ENCODE measurements at regions of chr12 and their contacts with region 1.

Region 1: DNA sequence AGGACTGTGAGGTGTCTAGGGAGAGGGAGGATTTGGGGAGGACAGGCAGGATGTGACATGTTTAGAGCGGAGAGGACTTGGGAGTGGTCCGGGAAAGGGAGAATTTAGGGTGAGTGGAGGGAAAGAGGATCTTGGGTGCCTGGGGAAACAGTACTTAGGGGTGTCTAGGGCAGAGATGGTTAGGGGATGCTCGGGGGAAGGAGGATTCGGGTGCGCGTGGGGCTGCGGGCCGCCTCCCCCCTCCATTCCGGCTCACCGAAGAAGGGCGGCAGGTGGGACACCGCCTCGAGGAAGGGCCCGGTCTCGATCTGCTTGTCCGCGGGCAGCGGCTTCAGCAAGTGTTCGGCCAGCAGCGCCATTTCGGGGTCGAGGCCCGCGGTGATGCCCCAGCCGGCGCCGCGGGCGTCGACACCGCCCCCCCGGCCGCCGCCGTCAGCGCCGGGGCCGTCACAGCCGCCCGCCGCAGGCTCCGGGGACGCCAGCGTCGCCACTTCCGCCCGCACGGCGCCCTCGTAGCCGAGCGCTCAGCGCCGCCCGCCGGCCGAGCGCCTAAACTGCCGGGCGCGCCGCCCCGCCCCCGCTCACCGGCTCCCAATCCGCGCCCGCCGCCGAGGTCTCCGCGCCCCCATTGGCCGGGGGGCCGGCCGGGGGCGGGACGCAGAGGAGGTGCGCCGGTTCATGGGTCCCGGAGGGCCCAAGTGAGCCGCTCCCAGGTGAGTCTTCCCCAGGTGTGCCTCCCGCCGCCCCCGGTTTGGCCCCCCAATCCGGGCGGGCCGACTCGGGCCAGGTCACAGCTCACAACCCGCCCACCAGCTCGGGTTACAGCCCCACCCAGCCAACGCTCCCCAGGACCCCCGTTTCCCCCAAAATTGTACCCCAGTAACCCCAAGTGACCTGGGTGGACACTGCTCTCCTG is at the start of gene GLTP:
- DNase-seq: peak; percentile 83
- H3K4me3 ChIP-seq: peak within 1 kb of the TSS; percentile 77 to 86 (median 83)
- H3K27ac ChIP-seq: peak within 1 kb of the TSS; percentile 72
- H3K4me1 ChIP-seq: peaks cover 31% of the 10 kb centered on the region
- H3K27me3 ChIP-seq: no peaks in the 10 kb centered on the region
- CTCF ChIP-seq: peak; percentile 41 to 44
- total RNA-seq, gene GLTP: 60.2 to 63.8 TPM

Region 2: DNA sequence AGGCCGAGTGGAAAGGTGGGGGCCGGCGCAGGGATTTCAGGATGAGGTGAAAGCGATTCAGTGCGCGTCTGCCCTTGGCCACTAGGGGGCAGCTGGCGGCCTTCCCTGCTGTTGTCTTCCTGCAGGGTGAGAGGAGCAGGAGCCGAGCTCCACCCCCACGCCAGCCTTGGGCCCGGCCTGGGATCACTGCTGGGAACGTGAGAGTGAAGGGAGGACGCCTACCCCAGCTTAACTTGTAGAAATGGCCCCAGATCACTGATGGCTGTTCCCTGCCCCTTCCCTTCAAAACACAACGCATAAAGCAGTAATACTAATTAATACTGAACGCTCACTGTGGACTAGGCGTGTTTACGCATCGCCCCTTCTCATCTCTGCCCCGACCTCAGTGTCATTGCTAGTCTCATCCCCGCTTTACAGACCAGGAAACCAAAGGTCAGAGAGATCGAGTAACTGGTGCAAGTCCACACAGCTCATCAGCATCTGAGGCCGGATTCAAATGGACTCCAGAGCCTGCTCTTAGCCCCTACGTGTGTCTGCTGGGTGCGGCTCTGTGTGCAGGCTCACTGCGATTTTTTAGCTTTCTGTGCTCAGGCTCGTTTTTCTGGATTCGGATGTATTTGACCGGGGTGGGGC is 282.4 kb before region 1 on chr12:
- CTCF ChIA-PET with region 1: no interaction called
- dilution Hi-C with region 1: no loop called
- in situ Hi-C with region 1: no loop called
- intact Hi-C with region 1: loop called (anchors 5 kb)
- DNase-seq: peak; percentile 62
- H3K4me3 ChIP-seq: no peak overlapping the region
- H3K27ac ChIP-seq: no peak overlapping the region
- H3K4me1 ChIP-seq: peaks cover 5% of the 10 kb centered on the region
- H3K27me3 ChIP-seq: no peaks in the 10 kb centered on the region
- CTCF ChIP-seq: peak; percentile 91 to 97

Region 3: GRCh38 chr12:109858764-109859163 is 21.5 kb before region 1 on chr12:
- CTCF ChIA-PET with region 1: no interaction called
- dilution Hi-C with region 1: no loop called
- in situ Hi-C with region 1: no loop called
- intact Hi-C with region 1: loop called (anchors 1 kb)
- DNase-seq: no peak
- H3K4me3 ChIP-seq: no peak overlapping the region
- H3K27ac ChIP-seq: no peak overlapping the region
- H3K4me1 ChIP-seq: no peaks in the 10 kb centered on the region
- H3K27me3 ChIP-seq: no peaks in the 10 kb centered on the region
- CTCF ChIP-seq: no peak

Region 4: DNA sequence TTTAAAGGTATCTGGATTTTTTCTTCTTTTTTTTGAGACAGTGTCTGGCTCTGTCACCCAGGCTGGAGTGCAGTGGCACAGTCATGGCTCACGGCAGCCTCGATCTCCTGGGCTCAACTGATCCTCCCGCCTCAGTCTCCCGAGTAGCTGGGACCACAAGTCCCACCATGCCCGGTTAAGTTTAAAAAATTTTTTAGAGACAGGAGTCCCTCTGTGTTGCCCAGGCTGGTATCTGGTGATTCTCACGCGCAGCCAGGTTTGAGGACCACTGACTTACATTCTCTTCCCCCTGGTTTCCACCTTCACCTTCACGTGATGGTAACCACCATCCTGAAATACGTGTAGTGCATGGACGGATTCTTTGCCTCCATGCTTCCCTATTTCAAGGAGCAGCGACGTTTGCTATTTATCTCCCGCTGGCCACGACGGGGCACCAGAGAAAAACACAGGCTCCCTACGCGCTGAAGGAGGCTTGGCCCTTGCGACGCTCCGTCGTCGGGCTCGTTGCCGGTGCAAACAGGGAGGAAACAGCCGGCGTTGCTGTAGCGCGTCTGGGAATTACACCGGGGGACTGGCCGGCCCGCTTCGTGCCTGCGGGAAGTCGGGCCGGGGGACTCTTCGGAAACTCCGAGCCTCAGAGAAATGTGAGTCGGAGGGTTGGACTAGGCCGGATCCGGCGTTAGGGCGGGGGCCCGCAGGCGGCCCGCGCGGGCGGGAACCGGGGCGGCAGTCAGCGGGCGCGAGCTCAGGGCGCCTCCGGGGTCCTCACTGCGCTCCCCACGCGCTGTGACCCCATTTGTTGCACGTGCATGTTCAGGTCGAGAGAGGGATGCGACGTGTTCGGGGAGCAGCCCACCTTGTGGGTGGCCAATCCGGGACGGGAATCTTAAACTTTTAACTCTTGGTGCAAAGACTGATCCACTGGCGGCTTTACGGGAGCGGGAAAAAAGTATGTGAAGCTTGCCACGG is 19.8 kb after region 1 on chr12 and contains the start of gene TCHP:
- CTCF ChIA-PET with region 1: no interaction called
- dilution Hi-C with region 1: no loop called
- in situ Hi-C with region 1: no loop called
- intact Hi-C with region 1: loop called (anchors 2 kb)
- DNase-seq: peak; percentile 85
- H3K4me3 ChIP-seq: peak within 1 kb of the TSS; percentile 45 to 70 (median 61)
- H3K27ac ChIP-seq: peak within 1 kb of the TSS; percentile 57
- H3K4me1 ChIP-seq: peaks cover 5% of the 10 kb centered on the region
- H3K27me3 ChIP-seq: no peaks in the 10 kb centered on the region
- CTCF ChIP-seq: peak; percentile 23 to 50
- total RNA-seq, gene TCHP: 4.0 to 19.4 TPM

Region 5: DNA sequence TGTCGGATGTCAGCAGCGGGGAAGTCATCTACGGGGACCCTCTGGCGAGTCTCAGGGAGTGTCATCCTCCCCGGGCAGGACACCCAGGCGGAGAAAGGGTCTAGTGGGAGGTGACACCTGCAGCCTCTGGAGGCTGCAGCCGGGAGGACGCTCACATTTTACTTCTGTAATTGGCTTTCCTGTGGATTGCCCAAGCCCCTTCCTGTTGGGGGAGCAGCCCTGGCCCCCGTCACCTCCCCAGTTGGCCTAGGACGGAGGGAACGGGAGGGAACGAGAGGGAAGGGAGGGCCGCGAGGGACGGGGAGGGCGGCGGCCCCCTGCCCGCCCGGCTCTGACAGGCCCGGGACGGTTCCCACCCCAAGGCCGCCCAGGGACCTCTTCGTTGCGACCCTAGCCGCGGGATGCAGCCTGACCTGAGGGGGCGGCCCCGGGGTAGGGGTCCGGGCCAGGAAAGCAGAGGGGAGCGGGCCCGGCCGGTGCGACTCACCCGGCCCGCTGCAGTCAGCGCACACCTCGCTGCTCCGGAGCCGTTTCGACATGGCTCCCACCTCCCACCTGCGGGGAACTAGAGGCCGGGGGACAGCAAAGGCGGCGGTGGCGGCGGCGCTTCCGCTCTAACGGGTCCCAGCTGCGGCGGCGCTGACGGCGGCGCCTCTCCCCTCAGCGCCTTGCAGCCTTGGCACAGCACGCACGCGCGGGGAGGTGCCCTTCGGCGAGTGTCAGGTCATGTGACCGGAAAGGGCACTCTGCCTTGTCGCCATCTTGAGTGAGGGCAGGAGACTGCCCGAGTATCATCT is 115.6 kb after region 1 on chr12 and contains the start of gene GIT2:
- CTCF ChIA-PET with region 1: no interaction called
- dilution Hi-C with region 1: no loop called
- in situ Hi-C with region 1: no loop called
- intact Hi-C with region 1: loop called (anchors 5 kb)
- DNase-seq: peak; percentile 86
- H3K4me3 ChIP-seq: peak within 1 kb of the TSS; percentile 72 to 83 (median 73)
- H3K27ac ChIP-seq: peak within 1 kb of the TSS; percentile 35
- H3K4me1 ChIP-seq: peaks cover 23% of the 10 kb centered on the region
- H3K27me3 ChIP-seq: no peaks in the 10 kb centered on the region
- CTCF ChIP-seq: peak in 1 of 2 donors; percentile 2
- total RNA-seq, gene GIT2: 26.8 to 30.8 TPM

Measured in mammary epithelial cell (primary cell).